WTC11 (cell line): ENCODE measurements at regions of chr22 and their contacts with region 1.

Region 1: DNA sequence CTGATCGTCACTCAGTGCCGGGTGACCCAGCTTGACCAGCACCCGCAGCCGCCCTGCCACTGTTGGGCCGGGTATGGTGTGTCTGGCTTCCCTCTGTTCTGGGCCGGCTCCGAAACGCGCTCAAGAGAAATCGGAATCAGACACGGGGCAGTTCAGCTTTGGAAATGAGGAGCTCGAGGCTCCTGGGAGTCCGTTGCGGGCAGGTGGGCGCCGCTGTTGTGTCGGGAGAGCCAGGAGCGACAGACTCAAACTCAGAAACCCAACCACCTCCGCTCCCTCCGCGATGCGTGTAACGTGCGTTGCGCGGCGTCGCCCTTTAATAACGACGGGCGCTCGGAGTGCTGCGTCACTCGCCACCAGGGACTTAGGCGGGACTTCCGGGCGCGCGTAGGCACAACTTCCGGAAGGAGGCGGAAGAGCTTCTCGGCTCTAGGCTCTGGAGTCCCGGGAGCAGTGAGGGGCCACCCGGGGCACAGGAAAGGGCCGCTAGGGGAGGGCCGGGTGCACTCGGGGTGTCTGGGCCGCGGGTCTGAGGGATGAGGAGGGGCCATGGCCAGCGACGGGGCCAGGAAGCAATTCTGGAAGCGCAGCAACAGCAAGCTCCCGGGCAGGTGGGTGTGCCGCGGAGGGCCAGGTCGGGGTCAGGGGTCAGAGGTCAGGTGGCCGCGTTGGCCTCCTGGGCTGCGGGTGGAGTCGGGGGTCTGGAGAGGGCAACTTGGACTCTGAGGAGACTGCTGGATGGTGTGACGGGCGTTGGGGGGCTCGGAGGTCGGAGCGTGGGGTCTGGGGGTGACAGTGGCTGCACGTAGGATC is at the start of gene TBC1D22A:
- DNase-seq: peak; percentile 94
- ATAC-seq: peak; percentile 85
- H3K4me3 Mint-ChIP-seq: peak within 1 kb of the TSS; percentile 99
- H3K27ac Mint-ChIP-seq: peak within 1 kb of the TSS; percentile 99
- H3K4me1 Mint-ChIP-seq: peaks cover 20% of the 10 kb centered on the region
- H3K27me3 Mint-ChIP-seq: no peaks in the 10 kb centered on the region
- CTCF ChIP-seq: no peak
- total RNA-seq, gene TBC1D22A: 18.1 to 21.0 TPM (median 19.1 TPM) in 3 replicates

Region 2: GRCh38 chr22:46737976-46738646 is 24.3 kb before region 1 on chr22 and contains the start of gene CERK:
- CTCF ChIA-PET with region 1: interaction called, 13 read pairs
- POLR2A ChIA-PET with region 1: interaction called, 6 read pairs
- DNase-seq: peak; percentile 68
- ATAC-seq: peak; percentile 70
- H3K4me3 Mint-ChIP-seq: peak within 1 kb of the TSS; percentile 89
- H3K27ac Mint-ChIP-seq: peak within 1 kb of the TSS; percentile 83; the same call in 1 of the 2 replicates
- H3K4me1 Mint-ChIP-seq: peaks cover 27% of the 10 kb centered on the region
- H3K27me3 Mint-ChIP-seq: no peaks in the 10 kb centered on the region; the same call in 1 of the 2 replicates
- CTCF ChIP-seq: no peak
- total RNA-seq, gene CERK: 45.6 to 50.2 TPM (median 49.7 TPM) in 3 replicates

Region 3: GRCh38 chr22:46748908-46749675 is 13.4 kb before region 1 on chr22:
- CTCF ChIA-PET with region 1: interaction called, 11 read pairs
- POLR2A ChIA-PET with region 1: no interaction called
- DNase-seq: no peak
- ATAC-seq: no peak
- H3K4me3 Mint-ChIP-seq: no peak overlapping the region
- H3K27ac Mint-ChIP-seq: no peak overlapping the region
- H3K4me1 Mint-ChIP-seq: no peaks in the 10 kb centered on the region
- H3K27me3 Mint-ChIP-seq: peaks cover 11% of the 10 kb centered on the region; the same call in 1 of the 2 replicates
- CTCF ChIP-seq: no peak

Region 4: GRCh38 chr22:46780453-46780852 is 18.0 kb after region 1 on chr22:
- CTCF ChIA-PET with region 1: no interaction called
- POLR2A ChIA-PET with region 1: no interaction called
- DNase-seq: no peak
- ATAC-seq: no peak
- H3K4me3 Mint-ChIP-seq: no peak overlapping the region
- H3K27ac Mint-ChIP-seq: no peak overlapping the region
- H3K4me1 Mint-ChIP-seq: no peaks in the 10 kb centered on the region
- H3K27me3 Mint-ChIP-seq: no peaks in the 10 kb centered on the region
- CTCF ChIP-seq: no peak

Region 5: GRCh38 chr22:46866591-46866990 is 104.1 kb after region 1 on chr22:
- CTCF ChIA-PET with region 1: no interaction called
- POLR2A ChIA-PET with region 1: no interaction called
- DNase-seq: no peak
- ATAC-seq: peak; percentile 65
- H3K4me3 Mint-ChIP-seq: no peak overlapping the region
- H3K27ac Mint-ChIP-seq: peak overlapping the region; percentile 37; the same call in 1 of the 2 replicates
- H3K4me1 Mint-ChIP-seq: peaks cover 30% of the 10 kb centered on the region
- H3K27me3 Mint-ChIP-seq: no peaks in the 10 kb centered on the region; the same call in 1 of the 2 replicates
- CTCF ChIP-seq: no peak

Region 6: DNA sequence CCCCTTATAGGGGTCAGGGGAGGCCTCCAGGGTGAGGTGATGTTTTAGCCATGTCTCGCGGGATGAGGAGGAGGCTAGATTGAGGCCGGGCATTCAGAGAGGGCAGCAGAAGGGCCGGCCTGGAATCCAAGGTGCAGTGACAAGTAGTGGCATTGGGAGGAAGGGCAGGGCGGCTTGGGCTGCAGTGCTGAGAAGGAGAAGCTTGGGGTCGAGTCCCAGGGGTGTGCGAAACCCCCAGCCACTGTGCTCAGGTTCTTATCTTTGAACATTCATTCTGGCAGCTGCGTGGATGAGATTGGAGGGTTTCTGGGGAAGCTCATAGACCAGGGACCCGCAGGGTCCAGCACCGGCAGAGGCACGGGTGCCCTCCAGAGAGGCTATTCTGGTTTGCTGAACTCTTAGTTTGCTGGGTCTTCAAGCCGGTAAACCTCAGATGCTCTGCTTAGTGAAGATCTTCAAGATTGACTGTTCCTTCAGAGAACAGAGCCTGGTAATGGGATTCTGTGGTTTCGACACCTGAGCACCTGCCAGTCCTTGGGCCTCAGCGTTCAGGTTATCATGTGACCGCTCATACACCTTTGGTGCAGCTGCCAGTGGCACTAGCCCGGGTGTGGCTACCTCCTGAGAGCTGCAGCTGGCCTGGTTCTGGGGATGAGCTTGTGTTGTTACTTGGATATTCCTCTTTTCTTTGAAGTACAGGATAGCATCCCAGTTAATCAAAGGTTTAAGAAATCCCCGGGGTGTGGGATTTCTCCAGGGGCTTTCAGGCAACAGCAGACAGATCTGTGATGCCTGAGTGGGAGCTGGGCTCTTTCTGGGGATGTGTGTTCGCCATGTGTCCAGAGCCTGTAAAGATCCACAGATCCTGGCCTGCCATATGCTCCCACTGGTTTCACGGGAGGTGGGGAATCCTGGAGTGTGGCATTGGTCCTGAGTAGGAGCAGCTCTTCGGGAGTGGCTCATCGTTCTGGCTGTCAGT is 152.8 kb after region 1 on chr22:
- CTCF ChIA-PET with region 1: no interaction called
- POLR2A ChIA-PET with region 1: no interaction called
- DNase-seq: no peak
- ATAC-seq: no peak
- H3K4me3 Mint-ChIP-seq: no peak overlapping the region
- H3K27ac Mint-ChIP-seq: no peak overlapping the region
- H3K4me1 Mint-ChIP-seq: no peaks in the 10 kb centered on the region
- H3K27me3 Mint-ChIP-seq: no peaks in the 10 kb centered on the region
- CTCF ChIP-seq: no peak